Caco-2 (cell line): ENCODE measurements at regions of chr20 and their contacts with region 1.

Region 1: DNA sequence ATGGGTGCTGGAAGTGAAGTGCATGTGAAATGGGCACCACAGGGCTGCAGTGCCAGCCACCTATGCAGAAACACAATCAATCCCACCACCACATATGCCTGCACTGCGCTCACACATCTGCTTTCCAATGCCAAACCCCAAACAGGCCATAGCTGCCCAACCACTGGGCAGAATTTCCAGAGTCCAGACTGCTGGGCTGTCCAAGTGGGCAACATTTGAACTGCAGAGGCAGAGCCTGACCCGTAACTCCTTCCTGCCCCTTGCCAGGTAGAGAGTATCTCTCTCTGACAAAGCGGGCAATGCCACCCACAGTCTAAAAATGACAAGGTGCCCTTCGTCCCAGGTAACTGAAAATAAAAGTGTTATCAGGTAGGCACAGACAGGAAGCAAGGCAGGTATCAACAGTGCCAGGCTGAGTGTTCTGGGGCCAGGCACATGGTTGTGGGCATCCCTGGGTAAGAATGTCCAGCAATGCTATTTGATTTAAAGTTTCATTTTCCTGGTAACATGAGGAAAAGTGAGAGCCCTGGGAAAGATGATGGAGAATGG is 79.5 kb downstream of the FOXA2 start:
- DNase-seq: no peak
- H3K4me3 ChIP-seq: no peak overlapping the region
- H3K4me3 Mint-ChIP-seq: no peak overlapping the region
- H3K27ac Mint-ChIP-seq: no peak overlapping the region
- H3K4me1 ChIP-seq: peaks cover 39% of the 10 kb centered on the region
- H3K4me1 Mint-ChIP-seq: peaks cover 41% of the 10 kb centered on the region
- H3K27me3 ChIP-seq: no peaks in the 10 kb centered on the region
- H3K27me3 Mint-ChIP-seq: no peaks in the 10 kb centered on the region
- CTCF ChIP-seq: no peak

Region 2: DNA sequence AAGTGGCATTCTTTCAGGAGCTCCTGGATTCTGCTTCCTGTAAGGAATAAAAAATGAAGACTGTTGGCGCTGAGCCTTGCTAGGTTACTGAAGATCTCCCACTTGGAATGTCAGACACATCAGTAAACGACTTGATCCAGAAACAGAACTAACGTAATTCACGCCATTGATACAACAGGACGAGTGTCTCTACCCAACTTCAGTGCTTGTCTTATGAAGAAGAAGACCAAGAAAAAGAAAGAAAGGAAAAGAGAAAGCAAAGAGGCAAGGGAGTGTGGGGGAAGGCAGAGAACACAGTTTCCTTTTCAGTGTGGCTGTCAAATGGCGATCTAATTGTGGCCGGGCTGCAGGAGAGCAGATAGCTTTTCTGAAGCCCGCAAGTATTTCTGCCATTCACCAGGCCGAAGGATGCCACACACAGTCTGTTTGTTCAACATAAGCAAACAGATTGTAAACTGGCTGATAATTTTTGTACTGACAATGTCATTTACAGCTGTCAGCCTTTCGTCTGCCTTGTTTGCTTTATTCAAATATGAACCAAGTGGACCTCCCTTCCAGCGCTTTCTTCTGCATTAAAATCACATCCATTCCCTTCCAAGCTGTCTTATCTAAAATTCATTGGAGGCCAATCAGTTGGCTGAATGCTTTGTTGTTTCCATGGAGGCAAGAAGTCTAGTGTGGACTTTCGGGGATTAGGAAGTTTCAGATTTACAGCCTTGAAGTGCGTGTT is 101.1 kb before region 1 on chr20:
- CTCF ChIA-PET with region 1: no interaction called
- POLR2A ChIA-PET with region 1: no interaction called
- intact Hi-C with region 1: no loop called
- DNase-seq: peak; percentile 53 to 60
- H3K4me3 ChIP-seq: peak overlapping the region; percentile 24
- H3K4me3 Mint-ChIP-seq: peak overlapping the region; percentile 72
- H3K27ac Mint-ChIP-seq: peak overlapping the region; percentile 39
- H3K4me1 ChIP-seq: peaks cover 15% of the 10 kb centered on the region
- H3K4me1 Mint-ChIP-seq: peaks cover 35% of the 10 kb centered on the region
- H3K27me3 ChIP-seq: no peaks in the 10 kb centered on the region
- H3K27me3 Mint-ChIP-seq: no peaks in the 10 kb centered on the region
- CTCF ChIP-seq: no peak

Region 3: DNA sequence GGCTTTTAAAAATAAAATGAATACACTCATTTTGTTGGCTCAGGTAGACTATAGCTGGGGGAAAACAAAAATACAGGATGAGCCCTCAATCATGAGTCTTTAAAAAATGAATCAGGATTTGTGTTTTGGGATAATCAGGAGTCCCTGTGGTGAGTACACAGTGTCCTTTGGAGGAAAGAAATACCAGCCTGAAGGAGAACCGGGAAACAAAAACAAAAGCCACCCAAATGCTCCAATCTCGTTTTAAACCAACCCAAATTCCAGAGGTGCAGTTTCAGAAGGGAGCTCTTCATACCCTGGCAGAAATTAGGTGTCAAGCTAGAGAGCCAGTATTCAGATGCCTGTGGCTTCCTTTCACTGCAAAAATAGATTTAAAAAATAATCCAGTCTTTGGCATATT is 102.8 kb after region 1 on chr20:
- CTCF ChIA-PET with region 1: no interaction called
- POLR2A ChIA-PET with region 1: interaction called, 12 read pairs
- intact Hi-C with region 1: no loop called
- DNase-seq: no peak
- H3K4me3 ChIP-seq: no peak overlapping the region
- H3K4me3 Mint-ChIP-seq: no peak overlapping the region
- H3K27ac Mint-ChIP-seq: no peak overlapping the region
- H3K4me1 ChIP-seq: no peaks in the 10 kb centered on the region
- H3K4me1 Mint-ChIP-seq: no peaks in the 10 kb centered on the region
- H3K27me3 ChIP-seq: no peaks in the 10 kb centered on the region
- H3K27me3 Mint-ChIP-seq: no peaks in the 10 kb centered on the region
- CTCF ChIP-seq: no peak